ENCODE measurements at regions of chr9 and their contacts with region 1.

Region 1: DNA sequence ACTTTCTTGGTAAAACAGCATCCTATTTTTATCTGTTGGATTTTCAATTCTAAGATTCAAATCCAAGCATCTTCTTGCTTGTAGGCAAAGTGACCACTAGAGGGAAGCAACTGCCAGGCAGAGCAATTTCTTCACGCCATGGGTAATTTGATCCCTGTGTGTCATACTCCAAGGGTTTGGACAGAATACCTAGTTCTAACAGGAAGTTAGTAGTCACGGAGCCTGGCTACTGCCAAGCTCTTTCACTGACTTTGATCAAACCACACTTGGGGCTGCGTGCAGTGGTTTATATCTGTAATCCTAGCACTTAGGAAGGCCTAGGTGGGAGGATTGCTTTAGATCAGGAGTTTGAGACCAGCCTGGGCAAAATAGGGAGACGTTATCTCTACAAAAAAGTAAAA is 473.6 kb upstream of the TNC start:
- DNase-seq: peak; percentile 76 to 83
- H3K4me3 ChIP-seq: no peak overlapping the region
- H3K27ac ChIP-seq: peak overlapping the region; percentile 46 to 57
- H3K4me1 ChIP-seq: peaks cover 0 to 26% (median 10%) of the 10 kb centered on the region in 4 donors
- H3K27me3 ChIP-seq: no peaks in the 10 kb centered on the region
- CTCF ChIP-seq: peak; percentile 81 to 83

Region 2: DNA sequence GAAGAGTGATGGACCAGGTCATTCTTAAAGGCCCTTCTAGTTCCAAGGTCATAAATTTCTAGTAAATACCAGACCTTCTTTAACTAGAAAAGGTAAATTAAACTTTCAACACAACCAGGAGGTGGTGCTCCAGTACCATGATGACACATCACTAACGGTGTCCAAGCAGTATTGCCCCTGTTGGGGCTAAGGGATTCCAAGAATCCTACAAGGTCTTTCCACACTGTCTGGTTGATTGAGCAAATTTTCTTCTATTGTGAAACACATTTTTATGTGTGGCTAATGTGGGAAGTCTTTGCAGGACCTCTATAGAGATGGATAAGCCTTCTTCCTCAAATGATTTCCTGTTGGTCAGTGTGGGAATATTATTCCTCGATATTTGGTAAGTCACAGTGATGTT is 102.4 kb after region 1 on chr9:
- intact Hi-C with region 1: loop called (anchors 10 kb)
- DNase-seq: peak in 1 of 2 donors; percentile 47
- H3K4me3 ChIP-seq: no peak overlapping the region
- H3K27ac ChIP-seq: no peak overlapping the region
- H3K4me1 ChIP-seq: peaks cover 0 to 16% (median 4%) of the 10 kb centered on the region in 4 donors
- H3K27me3 ChIP-seq: no peaks in the 10 kb centered on the region
- CTCF ChIP-seq: peak; percentile 29 to 32

Region 3: DNA sequence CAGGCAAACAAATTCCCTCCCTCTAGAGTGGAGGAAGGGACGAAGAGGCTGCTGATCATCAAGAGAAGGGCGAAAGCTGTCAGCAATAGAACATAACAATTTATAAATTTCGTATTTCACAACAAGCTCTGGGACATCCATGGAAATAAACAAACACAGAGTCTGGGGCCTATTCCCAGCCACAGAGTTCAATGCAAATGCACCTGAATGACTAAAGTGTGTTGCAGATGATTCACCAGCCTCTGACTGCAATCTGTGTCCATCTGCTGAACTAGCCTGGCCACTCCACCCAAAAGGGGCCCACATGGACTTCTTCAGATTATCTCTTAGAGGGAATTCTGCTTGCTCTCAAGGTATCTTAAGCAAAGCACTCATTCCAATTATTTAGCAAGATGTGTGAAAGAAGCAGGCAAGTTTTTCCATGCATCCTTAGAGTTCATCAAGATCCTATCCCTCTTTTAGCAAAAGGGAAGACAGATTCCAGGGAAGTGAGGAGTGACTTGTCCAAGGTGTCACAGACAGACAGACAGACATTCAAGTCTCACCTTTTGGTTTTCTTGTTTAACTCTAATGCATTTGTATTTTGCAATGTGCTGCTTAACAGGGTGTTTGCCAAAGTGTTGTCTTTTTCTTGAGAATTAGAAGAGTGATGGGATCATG is 254.2 kb after region 1 on chr9:
- intact Hi-C with region 1: no loop called
- DNase-seq: no peak
- H3K4me3 ChIP-seq: no peak overlapping the region
- H3K27ac ChIP-seq: no peak overlapping the region
- H3K4me1 ChIP-seq: no peaks in the 10 kb centered on the region
- H3K27me3 ChIP-seq: no peaks in the 10 kb centered on the region
- CTCF ChIP-seq: no peak

Region 4: GRCh38 chr9:116156621-116157314 is 565.2 kb after region 1 on chr9:
- intact Hi-C with region 1: loop called (anchors 5 kb)
- DNase-seq: peak; percentile 73 to 88
- H3K4me3 ChIP-seq: peak overlapping the region; percentile 48 to 59
- H3K27ac ChIP-seq: peak overlapping the region; percentile 81 to 84
- H3K4me1 ChIP-seq: peaks cover 0 to 51% (median 20%) of the 10 kb centered on the region in 4 donors
- H3K27me3 ChIP-seq: no peaks in the 10 kb centered on the region
- CTCF ChIP-seq: no peak

Region 5: DNA sequence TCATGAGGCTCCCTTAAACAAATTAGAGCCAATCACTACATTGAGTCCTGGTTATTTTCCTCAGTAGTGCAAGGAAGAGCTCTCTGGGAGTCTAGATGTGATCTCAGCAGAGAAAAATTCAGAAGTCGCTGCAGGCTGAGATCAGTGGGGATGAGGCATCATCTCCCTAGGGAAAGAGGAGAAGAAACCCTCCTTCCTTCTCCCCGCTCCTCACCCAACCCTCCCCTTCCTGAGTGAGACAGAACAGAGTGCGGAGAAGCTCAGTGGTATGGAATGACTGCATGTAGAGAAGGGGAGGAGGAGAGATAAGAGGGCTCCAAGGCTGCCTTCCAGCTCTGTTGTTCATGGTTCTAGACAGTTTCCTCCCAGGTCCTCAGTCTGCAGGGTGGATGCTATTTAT is 642.5 kb after region 1 on chr9:
- intact Hi-C with region 1: no loop called
- DNase-seq: no peak
- H3K4me3 ChIP-seq: no peak overlapping the region
- H3K27ac ChIP-seq: no peak overlapping the region
- H3K4me1 ChIP-seq: peaks cover 0 to 23% (median 4%) of the 10 kb centered on the region in 4 donors
- H3K27me3 ChIP-seq: no peaks in the 10 kb centered on the region
- CTCF ChIP-seq: no peak

Region 6: DNA sequence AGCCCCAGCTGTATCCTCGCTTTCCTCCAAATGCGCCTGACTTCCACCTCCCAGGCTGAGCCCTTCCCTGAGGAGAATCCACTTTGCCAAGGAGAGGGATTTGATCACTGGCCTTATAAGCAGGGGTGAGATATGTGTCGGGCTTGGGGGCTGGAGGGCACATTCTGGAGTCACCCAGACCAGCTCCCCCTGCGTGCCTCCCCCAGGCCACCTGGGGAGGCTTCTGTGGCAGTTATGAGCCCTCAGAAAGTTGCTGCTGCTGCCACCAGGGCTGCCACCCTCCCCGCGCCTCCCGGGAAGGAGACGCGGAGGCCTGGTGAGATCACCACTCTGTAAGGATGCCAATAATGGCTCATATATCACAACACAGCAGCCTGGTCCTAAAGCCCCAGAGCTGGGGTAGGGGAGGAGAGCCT is 773.5 kb after region 1 on chr9:
- intact Hi-C with region 1: loop called (anchors 10 kb)
- DNase-seq: peak; percentile 34 to 77
- H3K4me3 ChIP-seq: no peak overlapping the region
- H3K27ac ChIP-seq: peak overlapping the region; percentile 18 to 45
- H3K4me1 ChIP-seq: peaks cover 0 to 6% (median 0%) of the 10 kb centered on the region in 4 donors
- H3K27me3 ChIP-seq: no peaks in the 10 kb centered on the region
- CTCF ChIP-seq: peak; percentile 28 to 47

Region 7: GRCh38 chr9:116482740-116483139 is 891.2 kb after region 1 on chr9:
- intact Hi-C with region 1: loop called (anchors 10 kb)
- DNase-seq: no peak
- H3K4me3 ChIP-seq: no peak overlapping the region
- H3K27ac ChIP-seq: peak overlapping the region; percentile 35 to 67
- H3K4me1 ChIP-seq: peaks cover 0 to 21% (median 19%) of the 10 kb centered on the region in 4 donors
- H3K27me3 ChIP-seq: no peaks in the 10 kb centered on the region
- CTCF ChIP-seq: no peak

Region 8: DNA sequence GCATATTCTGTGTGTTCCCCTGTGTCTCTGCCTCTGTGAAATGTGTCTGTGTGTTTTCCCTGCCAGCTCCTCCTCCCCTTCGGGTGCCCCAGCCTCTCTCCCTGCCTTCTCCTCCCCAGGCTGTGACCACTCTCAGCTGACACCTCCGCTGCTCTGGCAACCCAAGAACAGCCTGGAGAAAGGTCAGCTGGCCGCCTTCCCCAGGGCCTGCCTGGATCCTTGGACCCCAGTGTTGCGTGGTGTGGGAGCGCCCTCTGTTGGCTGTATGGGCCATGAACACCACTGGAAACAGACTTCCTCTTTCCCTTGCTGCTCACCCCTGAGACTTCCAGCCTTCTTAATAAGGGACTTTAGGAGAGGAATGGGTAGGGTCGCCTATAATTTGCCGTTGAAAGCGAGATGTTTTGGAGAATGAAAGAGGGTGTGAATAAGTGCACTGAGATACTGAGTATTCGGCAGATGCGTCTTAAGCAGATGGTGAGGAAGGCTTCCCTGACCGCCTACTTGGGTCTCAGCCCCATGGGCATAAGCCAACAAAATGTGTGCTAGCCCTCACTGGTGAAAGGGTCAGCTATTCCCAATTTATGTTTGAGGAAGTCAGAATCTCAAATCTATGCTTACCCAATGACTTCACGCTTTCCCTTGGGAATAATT is 980.6 kb after region 1 on chr9:
- intact Hi-C with region 1: loop called (anchors 5 kb)
- DNase-seq: peak; percentile 75 to 87
- H3K4me3 ChIP-seq: no peak overlapping the region
- H3K27ac ChIP-seq: no peak overlapping the region
- H3K4me1 ChIP-seq: peaks cover 0 to 10% (median 3%) of the 10 kb centered on the region in 4 donors
- H3K27me3 ChIP-seq: no peaks in the 10 kb centered on the region
- CTCF ChIP-seq: peak; percentile 83 to 90

Measured in tibial artery (tissue), 4 donors.